ENCODE measurements at regions of chr3 and their contacts with region 1.

Region 1: DNA sequence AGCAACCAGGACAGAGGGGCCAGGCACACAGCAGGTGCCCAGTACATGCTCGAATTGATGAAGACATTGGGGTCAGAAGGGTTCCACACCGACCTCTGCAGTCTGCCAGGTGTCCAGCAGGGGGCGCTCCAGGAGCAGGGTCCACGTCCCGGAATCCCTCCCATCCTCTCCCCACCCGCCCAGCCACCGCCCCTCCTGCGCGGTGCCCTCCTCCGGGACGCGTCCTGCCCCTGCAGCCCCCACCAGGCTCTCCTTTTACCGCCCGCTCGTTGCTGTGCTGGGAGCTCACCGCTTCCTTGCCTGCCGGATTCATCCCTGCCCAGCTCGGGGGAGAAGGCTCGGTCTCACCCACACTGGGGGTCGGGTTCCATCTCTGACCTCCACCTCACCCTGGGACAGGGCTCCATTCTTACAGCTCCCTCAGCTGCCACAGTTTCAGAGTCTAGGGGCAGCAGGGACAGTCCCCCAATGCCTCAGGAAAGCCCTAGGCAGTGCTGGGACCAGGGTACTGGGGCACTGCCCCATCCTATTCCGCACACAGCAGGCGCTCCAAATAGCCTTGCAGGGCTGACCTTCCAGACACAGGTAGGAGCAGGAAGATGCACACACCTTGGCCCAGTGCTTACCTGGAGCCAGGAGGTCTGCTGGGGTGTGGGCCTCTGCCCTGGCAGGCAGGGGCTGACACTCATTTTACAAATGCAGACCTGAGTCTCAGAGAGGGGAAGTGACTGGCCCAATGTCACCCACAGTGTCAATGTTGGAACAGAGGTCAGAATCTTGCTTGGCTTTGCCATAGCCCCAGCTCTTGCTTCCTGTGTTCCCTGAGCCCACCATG is 31.0 kb downstream of the GRIP2 start:
- DNase-seq: peak; percentile 83
- ATAC-seq: peak; percentile 69

Region 2: GRCh38 chr3:14001136-14001535 is 508.0 kb before region 1 on chr3:
- intact Hi-C with region 1: no loop called
- DNase-seq: no peak
- ATAC-seq: no peak

Region 3: GRCh38 chr3:14548321-14548729 is 39.1 kb after region 1 on chr3:
- intact Hi-C with region 1: loop called (anchors 5 kb)
- DNase-seq: peak; percentile 83
- ATAC-seq: peak; percentile 91

Region 4: DNA sequence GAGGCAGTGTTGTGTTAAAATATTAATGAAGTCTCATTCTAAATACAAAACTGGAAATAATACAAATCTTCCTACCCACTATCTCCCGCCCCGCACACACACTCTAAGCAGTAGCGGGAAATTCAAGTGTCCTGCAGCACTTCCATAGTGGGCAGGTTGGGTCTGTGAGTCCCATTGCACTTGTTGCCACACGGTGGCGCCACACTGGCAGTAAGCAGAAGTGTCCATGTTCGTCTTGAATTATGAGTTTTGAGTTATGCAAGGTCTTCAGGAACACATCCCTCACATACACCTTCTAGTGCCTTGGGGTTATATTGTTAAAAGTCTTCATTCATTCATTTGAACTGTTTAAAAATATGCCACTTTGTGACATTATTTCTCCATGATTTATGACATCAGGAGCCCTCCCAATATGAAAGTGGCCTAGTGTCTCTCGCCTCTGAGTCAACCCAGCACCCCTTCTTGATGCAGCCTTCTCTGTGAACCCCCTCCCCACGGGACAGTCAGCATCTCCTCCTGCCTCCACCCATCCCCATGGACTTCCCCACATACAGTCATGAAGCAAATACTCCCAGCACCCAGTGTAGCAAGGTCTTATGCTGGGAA is 124.7 kb after region 1 on chr3:
- intact Hi-C with region 1: no loop called
- DNase-seq: no peak
- ATAC-seq: no peak